Psoas muscle (tissue), 8 donors: ENCODE measurements at regions of chr11 and their contacts with region 1.

Region 1: DNA sequence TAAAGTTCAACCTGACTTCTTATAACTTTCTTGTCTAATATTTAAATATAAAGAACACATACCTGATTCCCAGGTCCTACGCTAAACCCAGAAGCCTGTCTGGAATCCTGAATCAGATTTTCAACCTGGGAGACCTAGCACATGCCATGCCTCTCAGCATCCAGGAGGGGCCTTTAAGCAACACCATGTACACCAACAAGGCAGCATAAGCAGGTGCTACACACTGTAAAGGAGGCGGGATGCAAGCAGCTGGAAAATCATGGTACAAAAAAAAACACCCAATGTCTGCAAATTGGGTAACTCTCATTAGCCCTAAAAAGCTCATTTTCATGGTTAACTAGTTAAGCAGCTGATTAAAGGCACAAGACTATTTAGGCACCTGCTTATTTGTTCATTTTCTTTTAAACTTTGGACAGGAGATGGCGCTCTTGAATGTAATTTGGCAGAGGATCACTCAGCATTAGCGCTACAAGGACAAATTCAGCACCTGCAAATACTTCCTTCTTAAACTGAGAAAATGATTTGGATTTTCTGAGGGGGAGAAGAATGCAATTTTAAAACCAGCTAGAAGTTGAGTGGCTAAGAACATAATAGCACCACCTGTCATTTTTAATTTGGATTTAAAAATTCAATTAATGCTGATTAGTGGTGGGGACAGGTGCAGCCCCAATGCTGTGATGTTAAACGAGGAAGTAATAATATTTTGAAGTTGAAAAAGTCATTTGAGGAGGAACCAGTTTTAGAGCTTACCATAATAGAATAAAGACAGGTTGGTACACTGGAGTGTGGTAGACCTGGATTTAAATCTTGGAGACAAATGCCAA is 104.0 kb downstream of the FAR1 start:
- DNase-seq: no peak
- ATAC-seq: no peak
- H3K4me3 ChIP-seq: no peak overlapping the region
- H3K27ac ChIP-seq: no peak overlapping the region
- H3K4me1 ChIP-seq: no peaks in the 10 kb centered on the region
- H3K27me3 ChIP-seq: no peaks in the 10 kb centered on the region
- CTCF ChIP-seq: peak; percentile 19

Region 2: DNA sequence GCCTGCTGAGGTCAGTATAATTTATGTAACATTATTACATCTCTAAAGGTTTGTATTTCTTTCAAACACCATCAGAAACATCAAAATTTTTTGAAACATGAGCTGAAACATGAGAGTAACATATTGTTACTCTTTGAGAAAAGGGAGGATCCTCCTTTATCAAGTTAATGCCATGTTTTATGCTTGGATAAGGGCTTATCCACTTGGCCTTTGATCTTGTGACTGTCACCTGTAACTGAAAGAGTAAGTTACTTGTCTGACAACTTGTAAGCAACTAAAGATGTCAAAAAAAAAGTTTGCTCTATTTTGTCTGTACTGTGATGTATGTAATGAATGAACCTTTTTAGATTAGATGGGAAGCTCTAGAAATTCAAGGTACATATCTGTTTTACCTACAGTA is 44.4 kb before region 1 on chr11:
- intact Hi-C with region 1: no loop called
- DNase-seq: no peak
- ATAC-seq: no peak
- H3K4me3 ChIP-seq: no peak overlapping the region
- H3K27ac ChIP-seq: no peak overlapping the region
- H3K4me1 ChIP-seq: no peaks in the 10 kb centered on the region
- H3K27me3 ChIP-seq: no peaks in the 10 kb centered on the region
- CTCF ChIP-seq: no peak

Region 3: GRCh38 chr11:13861411-13861810 is 89.0 kb after region 1 on chr11:
- intact Hi-C with region 1: no loop called
- DNase-seq: no peak
- ATAC-seq: no peak
- H3K4me3 ChIP-seq: no peak overlapping the region
- H3K27ac ChIP-seq: no peak overlapping the region
- H3K4me1 ChIP-seq: no peaks in the 10 kb centered on the region
- H3K27me3 ChIP-seq: no peaks in the 10 kb centered on the region
- CTCF ChIP-seq: no peak

Region 4: GRCh38 chr11:14249121-14249963 is 476.9 kb after region 1 on chr11:
- intact Hi-C with region 1: loop called in 1 of 2 experiments (anchors 5 kb)
- DNase-seq: peak; percentile 56 to 75
- ATAC-seq: peak in 3 of 4 donors; percentile 46 to 68 (median 55)
- H3K4me3 ChIP-seq: no peak overlapping the region
- H3K27ac ChIP-seq: no peak overlapping the region
- H3K4me1 ChIP-seq: no peaks in the 10 kb centered on the region
- H3K27me3 ChIP-seq: peaks cover 0 to 10% (median 0%) of the 10 kb centered on the region in 3 donors
- CTCF ChIP-seq: peak; percentile 81